ENCODE measurements at regions of chr6 and their contacts with region 1.

Region 1: DNA sequence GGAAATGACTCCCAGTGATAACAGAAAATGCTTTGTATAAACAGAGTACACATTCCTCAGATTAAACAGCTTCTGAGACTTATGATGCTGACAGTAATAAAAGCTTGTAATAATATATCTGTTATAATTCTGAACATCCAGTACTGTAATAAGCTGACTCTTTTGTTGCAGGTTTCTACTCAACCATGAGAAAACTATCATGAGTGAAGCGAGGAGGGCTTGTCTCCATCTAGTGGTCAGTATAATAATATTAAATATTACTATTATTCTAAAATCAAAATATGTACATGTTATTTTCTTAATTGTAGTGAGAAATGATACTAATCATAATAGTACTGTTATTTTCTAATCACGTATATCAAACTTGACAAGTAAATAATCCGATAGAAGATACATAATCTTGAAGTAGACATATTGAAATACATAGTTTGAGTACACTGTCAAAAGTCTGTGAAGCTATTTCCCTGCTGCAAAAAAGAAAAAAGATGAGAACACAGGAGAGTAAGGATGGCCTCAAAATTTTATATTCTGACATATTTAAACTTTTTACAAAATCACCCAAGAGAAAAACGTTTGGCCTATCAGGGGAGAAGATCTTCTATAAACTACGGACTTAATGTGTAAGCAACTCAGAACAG is 183.1 kb downstream of the MOXD1 start:
- DNase-seq: no peak
- ATAC-seq: peak in 2 of 4 donors; percentile 39 to 42
- H3K4me3 ChIP-seq: no peak overlapping the region
- H3K27ac ChIP-seq: peak overlapping the region in 2 of 12 donors; percentile 7 to 22
- H3K4me1 ChIP-seq: peaks cover 0 to 6% (median 0%) of the 10 kb centered on the region in 12 donors
- H3K27me3 ChIP-seq: peaks cover 0 to 3% (median 0%) of the 10 kb centered on the region in 9 donors
- CTCF ChIP-seq: peak; percentile 43 to 79 (median 58)
- POLR2A ChIP-seq: no peak

Region 2: GRCh38 chr6:131914967-131915751 is 303.0 kb before region 1 on chr6:
- intact Hi-C with region 1: loop called in 4 of 10 experiments (anchors 5 kb)
- DNase-seq: peak in 4 of 5 donors; percentile 45 to 64 (median 46)
- ATAC-seq: peak in 2 of 4 donors; percentile 59 to 84
- H3K4me3 ChIP-seq: no peak overlapping the region
- H3K27ac ChIP-seq: no peak overlapping the region
- H3K4me1 ChIP-seq: peaks cover 0 to 5% (median 0%) of the 10 kb centered on the region in 12 donors
- H3K27me3 ChIP-seq: peaks cover 0 to 16% (median 0%) of the 10 kb centered on the region in 9 donors
- CTCF ChIP-seq: peak; percentile 69 to 92 (median 82)
- POLR2A ChIP-seq: no peak

Region 3: DNA sequence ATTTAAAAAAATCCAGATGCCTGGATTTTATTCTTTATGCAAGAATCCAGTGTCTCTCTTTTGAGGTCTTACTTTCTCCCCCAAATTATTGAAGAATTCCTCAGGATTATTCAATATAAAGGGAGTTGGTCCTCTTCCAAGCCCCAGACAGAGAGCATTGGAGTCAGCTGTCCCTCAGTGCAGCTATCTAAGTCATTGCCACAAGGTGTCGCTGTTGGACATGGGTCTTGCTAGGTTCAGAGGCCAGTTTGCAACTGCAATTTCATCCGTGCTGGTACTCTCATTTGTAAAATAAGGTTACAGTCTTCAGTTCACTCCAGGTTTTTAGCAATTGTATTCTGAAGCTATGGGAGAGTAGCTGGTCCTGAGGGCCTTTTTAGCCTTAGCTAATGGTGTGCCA is 294.8 kb before region 1 on chr6:
- intact Hi-C with region 1: loop called (anchors 1 to 5 kb)
- DNase-seq: peak in 3 of 5 donors; percentile 32 to 41 (median 35)
- ATAC-seq: peak in 2 of 4 donors; percentile 20 to 55
- H3K4me3 ChIP-seq: no peak overlapping the region
- H3K27ac ChIP-seq: no peak overlapping the region
- H3K4me1 ChIP-seq: no peaks in the 10 kb centered on the region
- H3K27me3 ChIP-seq: no peaks in the 10 kb centered on the region
- CTCF ChIP-seq: peak; percentile 22 to 68 (median 47)
- POLR2A ChIP-seq: no peak

Measured in heart left ventricle (tissue), 16 donors.